Tibial artery (tissue), 4 donors: ENCODE measurements at regions of chr5 and their contacts with region 1.

Region 1: DNA sequence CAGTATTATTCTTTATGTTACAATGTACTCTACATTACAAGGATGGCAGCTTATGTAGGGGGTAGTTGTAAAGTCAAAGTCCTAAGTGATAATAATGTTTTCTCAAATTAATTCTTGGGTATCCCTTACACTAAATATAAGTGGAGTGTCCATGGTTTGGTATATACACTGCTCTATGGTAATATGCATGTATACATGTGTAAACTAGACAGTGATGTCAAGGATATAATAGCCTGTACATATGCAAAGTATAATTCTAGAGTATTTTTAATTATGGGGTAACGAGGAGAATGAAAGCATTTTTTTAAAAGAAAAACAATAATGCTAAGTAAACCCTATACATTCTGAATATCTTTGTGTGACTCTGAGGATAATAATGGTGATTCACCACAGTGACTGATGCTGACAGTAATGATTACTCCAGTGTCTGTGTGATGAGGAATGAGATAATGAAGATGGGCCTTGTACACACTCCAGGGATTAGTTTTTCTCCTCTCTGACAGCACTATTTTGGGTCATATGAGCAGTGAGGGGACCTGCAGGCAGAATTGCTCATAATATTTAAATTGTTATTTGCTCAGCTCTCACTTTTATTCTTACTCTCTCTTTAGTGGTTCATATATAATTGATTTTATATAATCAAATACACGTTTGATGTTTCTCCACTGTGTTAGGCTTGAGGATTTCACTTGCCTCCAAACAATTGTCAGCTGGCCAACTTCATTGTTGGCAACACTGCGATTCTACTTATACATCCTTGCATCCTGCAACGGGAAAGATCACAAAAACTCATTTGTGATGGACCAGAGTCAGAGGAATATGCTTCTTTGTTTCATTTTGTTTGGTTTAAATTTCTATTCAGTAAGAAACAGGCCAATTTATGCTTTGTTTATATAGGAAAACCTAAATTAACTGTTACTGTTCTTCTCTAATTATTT is 88.2 kb downstream of the NREP start:
- DNase-seq: no peak
- H3K4me3 ChIP-seq: no peak overlapping the region
- H3K27ac ChIP-seq: no peak overlapping the region
- H3K4me1 ChIP-seq: no peaks in the 10 kb centered on the region
- H3K27me3 ChIP-seq: no peaks in the 10 kb centered on the region
- CTCF ChIP-seq: no peak

Region 2: DNA sequence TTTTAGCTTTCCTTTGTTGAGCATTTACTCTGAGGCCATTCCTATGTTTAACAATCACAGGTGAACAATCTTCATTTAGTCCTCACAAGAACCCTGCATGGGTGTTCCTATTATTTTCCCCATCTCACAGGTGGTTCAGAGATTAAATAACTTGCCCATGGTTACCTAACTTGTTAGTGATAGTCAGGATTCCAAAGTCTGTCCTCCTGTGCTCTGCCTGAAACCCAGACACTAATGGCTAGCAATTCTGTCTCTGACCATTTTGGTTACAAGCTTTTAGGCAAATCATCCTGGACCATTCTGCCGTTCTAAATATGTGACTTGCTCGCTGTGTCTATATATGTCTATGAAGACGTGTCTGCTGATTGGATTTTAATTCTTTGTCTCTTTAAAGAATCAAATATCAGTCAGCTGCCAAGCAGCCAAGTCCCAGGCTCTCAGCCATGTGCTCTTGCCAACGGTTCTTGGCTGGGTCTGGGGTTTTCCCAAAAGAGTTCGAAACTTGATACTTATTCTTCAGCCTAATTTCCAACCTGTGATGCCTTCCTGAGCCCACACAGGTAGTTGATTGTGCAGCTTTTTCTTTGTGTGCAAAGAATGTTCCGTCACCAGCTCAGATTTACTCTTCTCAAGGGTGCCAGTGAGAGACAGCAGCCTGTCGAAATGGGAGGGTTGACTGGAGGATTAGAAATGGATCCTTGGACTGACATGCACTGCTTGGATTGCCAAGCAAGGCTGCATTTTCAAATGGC is 33.4 kb before region 1 on chr5:
- intact Hi-C with region 1: no loop called
- DNase-seq: no peak
- H3K4me3 ChIP-seq: no peak overlapping the region
- H3K27ac ChIP-seq: no peak overlapping the region
- H3K4me1 ChIP-seq: peaks cover 0 to 15% (median 13%) of the 10 kb centered on the region in 4 donors
- H3K27me3 ChIP-seq: no peaks in the 10 kb centered on the region
- CTCF ChIP-seq: no peak

Region 3: DNA sequence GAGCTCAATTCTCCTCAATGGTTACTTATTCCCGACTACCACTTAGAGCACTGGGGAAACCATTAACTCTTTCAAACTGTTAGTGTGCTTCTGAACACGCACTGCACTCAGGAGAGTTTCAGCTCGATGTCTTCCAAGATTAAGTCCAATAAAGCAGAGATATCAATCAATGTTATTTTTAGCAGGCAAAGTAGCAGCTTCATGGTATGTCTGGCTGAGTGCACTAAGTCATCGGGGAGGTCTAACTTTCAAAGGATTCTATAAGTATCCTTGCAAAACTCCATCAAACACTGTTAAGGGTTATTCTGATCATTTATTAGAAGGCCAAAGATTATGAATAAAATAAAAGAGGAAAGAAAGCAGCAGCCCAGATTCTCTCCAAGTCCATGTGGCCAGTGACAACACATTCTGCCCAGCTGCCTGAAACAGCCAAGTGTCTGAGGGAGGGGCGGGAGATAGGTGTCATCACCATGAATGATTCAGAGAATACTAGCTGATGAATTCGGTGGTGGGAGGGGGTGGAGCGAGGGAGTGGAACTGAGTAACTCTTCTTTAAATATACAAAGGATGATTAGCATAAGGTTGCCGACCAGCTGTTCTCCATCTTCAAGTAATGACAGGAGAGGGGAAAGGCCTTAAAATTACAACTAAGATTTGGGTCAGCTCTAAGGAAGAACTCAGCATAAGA is 67.0 kb after region 1 on chr5:
- intact Hi-C with region 1: loop called (anchors 10 kb)
- DNase-seq: peak in 1 of 2 donors; percentile 29
- H3K4me3 ChIP-seq: no peak overlapping the region
- H3K27ac ChIP-seq: no peak overlapping the region
- H3K4me1 ChIP-seq: peaks cover 0 to 61% (median 23%) of the 10 kb centered on the region in 4 donors
- H3K27me3 ChIP-seq: no peaks in the 10 kb centered on the region
- CTCF ChIP-seq: no peak